A549 (cell line): ENCODE measurements at regions of chr2 and their contacts with region 1.

Region 1: GRCh38 chr2:1769703-1770422 is 25.5 kb upstream of the PXDN start:
- DNase-seq: peak; percentile 74 to 87
- ATAC-seq: peak; percentile 72 to 95; a peak in 5 of 6 replicates
- H3K4me3 ChIP-seq: no peak overlapping the region
- H3K27ac ChIP-seq: no peak overlapping the region
- H3K4me1 ChIP-seq: no peaks in the 10 kb centered on the region
- CTCF ChIP-seq: peak; percentile 81
- EP300 ChIP-seq: no peak
- POLR2A ChIP-seq: no peak
- RAD21 ChIP-seq: peak; percentile 76 to 89

Region 2: DNA sequence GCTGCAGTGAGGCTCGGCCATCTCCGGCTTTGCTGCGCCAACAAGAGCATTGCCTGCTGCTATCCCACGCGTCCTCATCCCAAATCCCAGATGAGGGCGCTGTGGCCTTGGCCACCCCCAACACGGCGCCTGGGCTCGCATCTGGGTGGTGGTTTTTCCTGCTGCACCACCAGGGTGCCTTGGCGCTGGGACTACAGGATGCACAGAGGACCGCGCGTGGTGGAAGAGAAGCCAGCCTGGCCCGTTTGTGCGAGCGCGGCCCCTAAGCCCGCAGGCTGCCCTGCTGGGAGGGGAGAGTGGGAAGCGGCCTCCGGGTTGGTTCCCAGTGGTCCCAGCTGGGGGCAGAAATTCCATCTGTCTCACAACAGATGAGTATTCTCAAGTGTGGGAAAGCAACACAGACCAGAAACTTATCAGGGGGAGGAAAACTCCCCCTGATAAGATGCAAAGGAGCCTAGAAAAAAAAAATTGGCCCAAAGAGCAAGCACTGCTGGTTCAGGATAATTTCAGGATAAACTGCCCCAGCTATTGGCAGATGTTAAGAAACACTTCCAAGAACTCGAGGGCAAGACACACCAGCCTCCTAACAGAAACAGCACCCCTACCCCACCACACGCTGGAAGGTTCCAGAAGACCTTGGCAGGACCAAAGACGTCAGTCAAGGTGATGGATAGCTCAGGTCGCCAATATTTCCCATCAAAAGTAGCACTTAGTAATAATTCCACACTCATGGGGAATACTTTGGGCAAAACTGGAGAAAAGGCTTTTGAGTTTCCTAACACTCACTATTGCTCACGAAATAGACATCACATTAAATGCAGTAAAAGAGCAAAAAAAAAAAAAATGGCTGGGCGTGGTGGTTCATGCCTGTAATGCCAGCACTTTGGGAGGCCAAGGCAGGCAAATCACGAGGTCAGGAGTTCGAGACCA is 177.6 kb before region 1 on chr2:
- CTCF ChIA-PET with region 1: interaction called, 10 read pairs
- POLR2A ChIA-PET with region 1: no interaction called
- DNase-seq: peak; percentile 36 to 56
- ATAC-seq: peak; percentile 4 to 76; a peak in 3 of 6 replicates
- H3K4me3 ChIP-seq: no peak overlapping the region
- H3K27ac ChIP-seq: no peak overlapping the region
- H3K4me1 ChIP-seq: no peaks in the 10 kb centered on the region
- CTCF ChIP-seq: 0 out of 3 replicates have a peak, but pooled peaks have one; percentile 10
- EP300 ChIP-seq: no peak
- POLR2A ChIP-seq: no peak
- RAD21 ChIP-seq: peak; percentile 48 to 61; a peak in 4 of 5 replicates

Region 3: GRCh38 chr2:1758774-1759610 is 10.9 kb before region 1 on chr2:
- CTCF ChIA-PET with region 1: interaction called, 26 read pairs
- POLR2A ChIA-PET with region 1: no interaction called
- DNase-seq: no peak
- ATAC-seq: no peak
- H3K4me3 ChIP-seq: no peak overlapping the region
- H3K27ac ChIP-seq: no peak overlapping the region
- H3K4me1 ChIP-seq: no peaks in the 10 kb centered on the region
- CTCF ChIP-seq: no peak
- EP300 ChIP-seq: no peak
- POLR2A ChIP-seq: no peak
- RAD21 ChIP-seq: no peak